Ovary (tissue), 10 donors: ENCODE measurements at regions of chr10 and their contacts with region 1.

Region 1: GRCh38 chr10:375815-376505 is 240.7 kb downstream of the ZMYND11 start:
- DNase-seq: no peak
- H3K4me3 ChIP-seq: no peak overlapping the region
- H3K27ac ChIP-seq: no peak overlapping the region
- H3K4me1 ChIP-seq: no peaks in the 10 kb centered on the region
- H3K27me3 ChIP-seq: no peaks in the 10 kb centered on the region
- CTCF ChIP-seq: no peak
- EP300 ChIP-seq: no peak
- POLR2A ChIP-seq: no peak

Region 2: GRCh38 chr10:329361-330099 is 46.4 kb before region 1 on chr10:
- intact Hi-C with region 1: loop called in 1 of 4 experiments (anchors 5 kb)
- DNase-seq: peak; percentile 85 to 90 (median 87)
- H3K4me3 ChIP-seq: no peak overlapping the region
- H3K27ac ChIP-seq: no peak overlapping the region
- H3K4me1 ChIP-seq: peaks cover 2% of the 10 kb centered on the region
- H3K27me3 ChIP-seq: no peaks in the 10 kb centered on the region
- CTCF ChIP-seq: no peak
- EP300 ChIP-seq: no peak
- POLR2A ChIP-seq: no peak